Transverse colon (tissue), 4 donors: ENCODE measurements at regions of chr10 and their contacts with region 1.

Region 1: DNA sequence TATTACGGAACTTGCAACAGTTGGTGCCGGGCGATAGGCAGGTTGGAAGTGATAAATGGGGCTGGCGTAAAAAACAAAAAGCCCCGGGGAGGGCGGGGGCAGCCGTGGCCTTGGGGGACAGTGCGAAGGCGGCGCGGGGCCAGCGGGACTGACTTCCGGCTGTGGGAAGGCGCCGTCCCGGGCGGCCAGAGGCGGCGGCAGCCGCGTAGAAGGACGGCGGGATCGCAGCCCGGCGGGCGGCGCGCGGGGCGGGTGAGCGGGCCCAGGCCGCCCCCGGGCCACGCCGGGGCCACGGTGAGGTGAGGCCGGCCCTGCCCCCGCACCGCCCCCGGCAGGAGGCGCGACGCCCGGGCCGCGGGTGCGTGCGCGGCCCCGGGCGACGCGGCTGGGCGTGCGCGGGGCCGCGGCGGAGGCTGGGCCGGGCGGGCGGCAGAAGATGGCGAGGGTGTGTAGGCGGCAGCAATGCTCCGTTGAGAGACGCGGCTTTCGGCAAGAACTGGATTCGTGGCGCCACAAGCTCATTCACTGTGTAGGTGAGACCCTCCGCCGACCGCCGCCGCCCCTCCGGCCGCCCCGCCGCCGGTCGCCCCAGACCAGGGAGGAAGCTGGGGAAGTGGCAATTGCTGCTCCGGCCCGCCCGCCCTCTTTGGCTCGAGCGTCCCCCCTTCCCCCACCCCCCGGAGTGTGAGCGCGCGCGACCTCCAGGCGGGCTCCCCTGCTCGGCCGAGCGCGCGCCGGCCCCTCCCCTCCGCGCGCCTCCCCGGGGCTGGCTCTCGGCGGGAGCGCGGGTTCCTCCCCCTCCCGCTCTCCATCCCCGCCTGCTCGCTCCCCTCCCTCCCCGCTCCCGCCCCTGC is at the start of gene LCOR:
- DNase-seq: peak; percentile 87
- H3K4me3 ChIP-seq: peak within 1 kb of the TSS; percentile 73 to 99 (median 92)
- H3K27ac ChIP-seq: peak within 1 kb of the TSS; percentile 94 to 98 (median 97)
- H3K4me1 ChIP-seq: peaks cover 23 to 45% (median 39%) of the 10 kb centered on the region in 4 donors
- H3K27me3 ChIP-seq: no peaks in the 10 kb centered on the region
- CTCF ChIP-seq: no peak
- EP300 ChIP-seq: no peak
- POLR2A ChIP-seq: peak; percentile 68
- total RNA-seq, gene LCOR: 47.2 to 86.4 (median 60.0) TPM

Region 2: DNA sequence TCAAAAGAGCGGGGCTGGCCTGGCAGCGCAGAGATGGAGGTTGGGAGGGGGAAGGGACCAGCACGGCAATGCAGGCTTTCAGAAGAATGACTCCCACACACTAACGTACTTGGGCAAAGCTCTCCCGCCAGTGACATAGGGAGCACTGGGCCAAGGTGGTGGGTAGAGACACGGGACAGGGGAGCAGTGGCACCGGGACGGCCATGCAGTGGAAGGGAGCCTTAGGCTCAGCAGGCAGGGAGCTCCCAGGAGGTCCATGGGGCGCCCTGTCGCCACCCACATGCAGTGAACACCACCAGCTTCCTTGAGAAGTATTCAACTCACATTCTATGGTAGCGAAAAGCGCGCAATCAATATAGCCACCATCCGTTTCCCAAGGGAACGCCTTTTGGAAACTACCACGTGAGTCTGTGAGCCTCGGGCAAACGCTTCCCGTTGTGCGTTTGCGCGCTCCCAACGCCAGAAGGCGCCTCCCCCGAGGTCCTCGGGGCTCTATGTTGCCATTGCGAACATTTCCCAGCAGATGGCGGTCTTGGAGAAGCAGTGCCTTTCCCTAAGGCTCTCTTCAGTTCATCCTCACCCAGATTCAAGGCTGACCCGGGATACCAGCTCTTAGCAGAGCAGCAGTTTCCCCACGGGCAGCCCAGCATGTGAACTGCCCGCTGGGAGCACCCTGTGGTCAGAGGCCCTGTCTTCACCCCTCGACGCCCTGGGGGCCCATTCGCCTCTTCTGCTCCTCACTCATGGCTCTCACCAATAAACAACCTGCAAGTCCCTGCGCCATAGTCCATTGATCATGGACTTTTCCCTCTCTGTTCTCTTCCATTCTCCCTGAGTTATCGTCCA is 456.9 kb before region 1 on chr10:
- in situ Hi-C with region 1: no loop called
- intact Hi-C with region 1: loop called (anchors 10 kb)
- DNase-seq: peak; percentile 88
- H3K4me3 ChIP-seq: peak overlapping the region; percentile 7 to 41 (median 24)
- H3K27ac ChIP-seq: no peak overlapping the region
- H3K4me1 ChIP-seq: peaks cover 4 to 24% (median 12%) of the 10 kb centered on the region in 4 donors
- H3K27me3 ChIP-seq: no peaks in the 10 kb centered on the region
- CTCF ChIP-seq: peak; percentile 89 to 96 (median 92)
- EP300 ChIP-seq: no peak
- POLR2A ChIP-seq: no peak

Region 3: GRCh38 chr10:96642973-96643372 is 189.1 kb before region 1 on chr10:
- in situ Hi-C with region 1: loop called in 1 of 4 experiments (anchors 25 kb)
- intact Hi-C with region 1: no loop called
- DNase-seq: peak; percentile 80
- H3K4me3 ChIP-seq: no peak overlapping the region
- H3K27ac ChIP-seq: no peak overlapping the region
- H3K4me1 ChIP-seq: peaks cover 0 to 17% (median 0%) of the 10 kb centered on the region in 4 donors
- H3K27me3 ChIP-seq: no peaks in the 10 kb centered on the region
- CTCF ChIP-seq: peak; percentile 43 to 56 (median 53)
- EP300 ChIP-seq: no peak
- POLR2A ChIP-seq: no peak